ENCODE measurements at regions of chr7 and their contacts with region 1.

Region 1: GRCh38 chr7:143214789-143215679 is 6.8 kb upstream of the TAS2R40 start:
- DNase-seq: peak; percentile 25 to 73 (median 68)
- H3K4me3 ChIP-seq: no peak overlapping the region
- H3K4me3 Mint-ChIP-seq: no peak overlapping the region
- H3K27ac ChIP-seq: no peak overlapping the region
- H3K27ac Mint-ChIP-seq: peak overlapping the region in 1 of 8 donors; percentile 15
- H3K4me1 ChIP-seq: no peaks in the 10 kb centered on the region
- H3K4me1 Mint-ChIP-seq: no peaks in the 10 kb centered on the region
- H3K27me3 ChIP-seq: no peaks in the 10 kb centered on the region
- H3K27me3 Mint-ChIP-seq: peaks cover 0 to 10% of the 10 kb centered on the region in 2 donors

Region 2: DNA sequence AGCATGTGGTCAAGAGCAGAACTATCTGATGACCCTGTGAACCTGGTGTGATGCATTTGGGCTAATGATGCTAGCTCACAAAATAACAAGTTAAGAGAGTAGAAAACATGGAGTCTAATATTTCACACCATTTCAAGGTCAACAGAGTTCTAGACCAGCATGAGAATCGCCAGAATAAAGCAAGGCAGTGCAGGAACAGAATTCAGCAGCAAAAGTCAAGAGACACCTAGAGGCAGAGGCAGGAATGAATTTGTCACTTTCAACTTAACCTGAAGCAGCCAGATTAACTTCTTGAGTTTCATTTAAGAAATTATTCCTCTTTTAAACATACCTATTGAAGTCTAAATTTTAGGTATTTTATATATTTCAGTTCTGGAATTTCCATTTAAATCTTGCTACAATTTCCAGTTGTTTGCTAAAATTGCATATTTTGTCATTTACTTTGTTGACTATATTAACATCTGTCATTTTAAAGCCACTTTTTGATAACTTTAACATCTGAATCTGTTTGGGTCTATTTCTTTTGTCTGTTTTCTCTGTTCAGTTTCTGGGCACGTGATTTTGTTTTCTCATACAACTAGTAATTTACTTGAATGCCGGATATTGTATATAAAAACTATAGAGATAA is 913.0 kb before region 1 on chr7:
- CTCF ChIA-PET with region 1: interaction called, 11 read pairs
- POLR2A ChIA-PET with region 1: no interaction called
- DNase-seq: no peak
- H3K4me3 ChIP-seq: no peak overlapping the region
- H3K4me3 Mint-ChIP-seq: no peak overlapping the region
- H3K27ac ChIP-seq: no peak overlapping the region
- H3K27ac Mint-ChIP-seq: no peak overlapping the region
- H3K4me1 ChIP-seq: peaks cover 16% of the 10 kb centered on the region
- H3K4me1 Mint-ChIP-seq: peaks cover 15 to 33% (median 16%) of the 10 kb centered on the region in 3 donors
- H3K27me3 ChIP-seq: no peaks in the 10 kb centered on the region
- H3K27me3 Mint-ChIP-seq: peaks cover 13 to 22% of the 10 kb centered on the region in 2 donors

Region 3: GRCh38 chr7:142880876-142881505 is 334.0 kb before region 1 on chr7:
- CTCF ChIA-PET with region 1: interaction called, 14 read pairs
- POLR2A ChIA-PET with region 1: no interaction called
- DNase-seq: peak; percentile 13 to 62 (median 29)
- H3K4me3 ChIP-seq: no peak overlapping the region
- H3K4me3 Mint-ChIP-seq: no peak overlapping the region
- H3K27ac ChIP-seq: no peak overlapping the region
- H3K27ac Mint-ChIP-seq: no peak overlapping the region
- H3K4me1 ChIP-seq: no peaks in the 10 kb centered on the region
- H3K4me1 Mint-ChIP-seq: peaks cover 0 to 4% (median 0%) of the 10 kb centered on the region in 3 donors
- H3K27me3 ChIP-seq: no peaks in the 10 kb centered on the region
- H3K27me3 Mint-ChIP-seq: peaks cover 9 to 42% of the 10 kb centered on the region in 2 donors

Region 4: DNA sequence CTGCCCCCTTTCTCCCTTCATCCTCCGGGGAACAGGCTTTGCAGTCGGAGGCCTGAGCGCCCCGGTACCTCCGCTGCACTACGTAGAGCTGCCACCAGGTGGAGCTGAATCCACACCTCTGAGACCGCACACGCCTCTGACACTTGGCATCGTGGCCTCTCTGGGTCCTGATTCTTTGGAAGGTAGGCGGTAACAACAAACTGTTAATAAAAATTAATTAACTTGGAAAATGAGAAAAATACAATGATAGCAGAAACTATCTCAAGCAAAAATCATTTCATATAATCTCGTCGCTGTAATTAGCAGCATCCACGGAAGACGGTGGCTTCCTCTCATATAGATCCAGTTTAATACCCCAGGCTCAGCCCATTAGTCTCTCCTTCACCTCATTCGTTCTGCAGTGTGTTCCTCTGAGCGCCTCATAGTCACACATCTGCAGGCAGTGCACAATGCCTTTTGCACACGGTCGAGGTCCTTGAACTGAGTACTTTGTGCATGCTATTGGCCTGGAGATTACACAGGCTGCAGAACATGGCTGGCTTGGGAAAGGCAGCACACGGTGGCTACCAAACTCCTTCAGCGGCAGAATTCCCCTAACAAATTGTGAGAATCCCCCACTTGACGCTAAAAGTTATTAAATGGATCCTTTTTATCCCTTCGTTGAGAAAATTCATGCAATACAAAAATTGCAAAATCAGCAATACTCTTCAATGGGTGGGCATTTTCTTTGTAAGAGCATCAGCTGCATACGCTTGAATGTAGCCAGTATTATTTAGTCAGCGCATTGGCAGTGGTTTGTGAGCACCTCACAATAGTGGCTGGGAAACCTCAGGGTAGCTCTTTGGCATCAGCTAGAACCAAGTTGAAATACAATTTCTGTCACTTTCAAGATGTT is 206.8 kb before region 1 on chr7:
- CTCF ChIA-PET with region 1: interaction called, 70 read pairs
- POLR2A ChIA-PET with region 1: no interaction called
- DNase-seq: peak; percentile 66 to 85 (median 69)
- H3K4me3 ChIP-seq: no peak overlapping the region
- H3K4me3 Mint-ChIP-seq: no peak overlapping the region
- H3K27ac ChIP-seq: no peak overlapping the region
- H3K27ac Mint-ChIP-seq: peak overlapping the region in 1 of 8 donors; percentile 8
- H3K4me1 ChIP-seq: peaks cover 1% of the 10 kb centered on the region
- H3K4me1 Mint-ChIP-seq: peaks cover 6 to 9% (median 7%) of the 10 kb centered on the region in 3 donors
- H3K27me3 ChIP-seq: peaks cover 6% of the 10 kb centered on the region
- H3K27me3 Mint-ChIP-seq: peaks cover 4 to 14% of the 10 kb centered on the region in 2 donors

Region 5: GRCh38 chr7:143063741-143064140 is 151.3 kb before region 1 on chr7:
- CTCF ChIA-PET with region 1: no interaction called
- POLR2A ChIA-PET with region 1: no interaction called
- DNase-seq: no peak
- H3K4me3 ChIP-seq: no peak overlapping the region
- H3K4me3 Mint-ChIP-seq: no peak overlapping the region
- H3K27ac ChIP-seq: no peak overlapping the region
- H3K27ac Mint-ChIP-seq: no peak overlapping the region
- H3K4me1 ChIP-seq: no peaks in the 10 kb centered on the region
- H3K4me1 Mint-ChIP-seq: no peaks in the 10 kb centered on the region
- H3K27me3 ChIP-seq: no peaks in the 10 kb centered on the region
- H3K27me3 Mint-ChIP-seq: peaks cover 7 to 8% of the 10 kb centered on the region in 2 donors

Region 6: DNA sequence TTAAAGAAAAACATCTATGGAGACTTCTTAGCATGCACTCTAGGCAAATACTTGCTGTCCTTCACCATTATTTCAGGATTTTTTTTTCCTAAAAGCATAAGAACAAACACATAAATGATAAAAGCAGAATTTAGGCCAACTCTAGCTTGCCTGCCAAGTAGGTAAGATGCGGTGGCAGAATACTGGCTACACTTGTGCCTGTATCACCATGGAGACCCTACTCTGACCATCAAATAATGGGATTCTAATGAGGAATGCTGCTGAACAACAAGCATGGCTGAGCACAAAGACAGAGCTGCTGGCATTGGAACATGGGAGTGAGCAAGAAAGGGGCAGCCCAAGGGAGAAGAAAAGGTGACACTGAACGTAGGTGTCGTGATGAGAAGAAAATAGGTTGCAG is 11.6 kb before region 1 on chr7:
- CTCF ChIA-PET with region 1: interaction called, 11 read pairs
- POLR2A ChIA-PET with region 1: no interaction called
- DNase-seq: no peak
- H3K4me3 ChIP-seq: no peak overlapping the region
- H3K4me3 Mint-ChIP-seq: no peak overlapping the region
- H3K27ac ChIP-seq: no peak overlapping the region
- H3K27ac Mint-ChIP-seq: no peak overlapping the region
- H3K4me1 ChIP-seq: peaks cover 16% of the 10 kb centered on the region
- H3K4me1 Mint-ChIP-seq: peaks cover 11 to 15% (median 14%) of the 10 kb centered on the region in 3 donors
- H3K27me3 ChIP-seq: no peaks in the 10 kb centered on the region
- H3K27me3 Mint-ChIP-seq: peaks cover 8 to 51% of the 10 kb centered on the region in 2 donors

Region 7: GRCh38 chr7:143229054-143229790 is 14.2 kb after region 1 on chr7:
- CTCF ChIA-PET with region 1: interaction called, 10 read pairs
- POLR2A ChIA-PET with region 1: no interaction called
- DNase-seq: no peak
- H3K4me3 ChIP-seq: no peak overlapping the region
- H3K4me3 Mint-ChIP-seq: no peak overlapping the region
- H3K27ac ChIP-seq: no peak overlapping the region
- H3K27ac Mint-ChIP-seq: no peak overlapping the region
- H3K4me1 ChIP-seq: no peaks in the 10 kb centered on the region
- H3K4me1 Mint-ChIP-seq: no peaks in the 10 kb centered on the region
- H3K27me3 ChIP-seq: no peaks in the 10 kb centered on the region
- H3K27me3 Mint-ChIP-seq: peaks cover 4 to 11% of the 10 kb centered on the region in 2 donors

Region 8: GRCh38 chr7:143248761-143249354 is 33.8 kb after region 1 on chr7:
- CTCF ChIA-PET with region 1: no interaction called
- POLR2A ChIA-PET with region 1: no interaction called
- DNase-seq: no peak
- H3K4me3 ChIP-seq: no peak overlapping the region
- H3K4me3 Mint-ChIP-seq: peak overlapping the region in 3 of 7 donors; percentile 12 to 19 (median 19)
- H3K27ac ChIP-seq: no peak overlapping the region
- H3K27ac Mint-ChIP-seq: peak overlapping the region in 5 of 8 donors; percentile 23 to 86 (median 60)
- H3K4me1 ChIP-seq: peaks cover 72% of the 10 kb centered on the region
- H3K4me1 Mint-ChIP-seq: peaks cover 84 to 99% (median 97%) of the 10 kb centered on the region in 3 donors
- H3K27me3 ChIP-seq: no peaks in the 10 kb centered on the region
- H3K27me3 Mint-ChIP-seq: no peaks in the 10 kb centered on the region

Measured in CD8-positive, alpha-beta memory T cell (primary cell).